B cell (primary cell): ENCODE measurements at regions of chr1 and their contacts with region 1.

Region 1: DNA sequence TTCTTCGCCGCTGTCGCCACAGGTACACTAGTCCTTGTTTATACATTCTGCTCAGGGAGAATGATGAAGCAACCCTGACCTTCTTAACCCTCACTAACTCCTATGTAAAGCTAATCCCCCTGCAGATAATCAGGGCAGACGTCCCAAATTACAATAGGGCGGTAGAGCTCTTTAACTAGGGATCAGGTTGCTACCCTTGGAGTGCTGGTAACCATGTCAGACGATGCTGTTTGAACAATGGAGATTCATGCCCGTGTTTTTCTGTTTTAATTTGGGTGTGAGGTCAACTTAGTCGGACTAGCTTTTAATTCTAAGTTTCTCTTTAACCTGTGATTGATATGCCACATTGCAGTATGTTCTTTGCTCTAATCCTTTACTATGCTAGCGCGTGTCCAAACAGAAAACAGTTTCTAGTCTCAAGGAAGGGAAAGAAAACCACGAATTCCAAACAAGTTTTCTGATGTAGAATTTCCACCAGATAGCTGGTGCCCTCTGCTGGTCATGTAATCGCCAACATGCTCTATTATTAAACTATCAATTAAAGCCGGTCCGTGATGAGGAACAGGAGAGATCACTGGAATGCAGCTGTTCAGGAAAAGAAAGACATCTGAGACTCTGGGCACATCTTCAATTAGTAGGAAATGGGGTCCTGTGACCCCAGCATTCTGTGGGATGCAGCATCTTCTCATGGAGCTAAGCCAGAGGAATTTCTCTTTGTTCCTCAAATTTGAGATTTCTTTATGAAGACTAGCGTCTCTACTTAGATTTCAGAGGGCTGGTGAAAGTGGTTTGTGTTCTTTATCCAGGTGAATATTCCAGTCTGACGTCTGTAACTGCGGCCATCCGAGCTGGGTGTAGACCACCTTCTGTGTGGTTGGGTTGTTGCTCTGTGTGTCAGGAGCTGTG is 18.3 kb upstream of the VAMP3 start:
- DNase-seq: peak; percentile 70
- ATAC-seq: peak; percentile 41
- H3K4me3 ChIP-seq: no peak overlapping the region
- H3K4me3 Mint-ChIP-seq: peak overlapping the region; percentile 42
- H3K27ac ChIP-seq: no peak overlapping the region
- H3K27ac Mint-ChIP-seq: no peak overlapping the region
- H3K4me1 ChIP-seq: peaks cover 0 to 7% of the 10 kb centered on the region in 2 donors
- H3K4me1 Mint-ChIP-seq: peaks cover 4% of the 10 kb centered on the region
- H3K27me3 ChIP-seq: no peaks in the 10 kb centered on the region
- H3K27me3 Mint-ChIP-seq: no peaks in the 10 kb centered on the region
- CTCF ChIP-seq: peak; percentile 90

Region 2: GRCh38 chr1:7680207-7680954 is 72.4 kb before region 1 on chr1:
- CTCF ChIA-PET with region 1: interaction called, 504 read pairs
- POLR2A ChIA-PET with region 1: interaction called, 3 read pairs
- intact Hi-C with region 1: no loop called
- DNase-seq: peak; percentile 60
- ATAC-seq: peak; percentile 73
- H3K4me3 ChIP-seq: peak overlapping the region in 4 of 5 experiments; percentile 38 to 64 (median 52)
- H3K4me3 Mint-ChIP-seq: peak overlapping the region; percentile 83
- H3K27ac ChIP-seq: no peak overlapping the region
- H3K27ac Mint-ChIP-seq: peak overlapping the region; percentile 53
- H3K4me1 ChIP-seq: peaks cover 6 to 12% of the 10 kb centered on the region in 2 donors
- H3K4me1 Mint-ChIP-seq: no peaks in the 10 kb centered on the region
- H3K27me3 ChIP-seq: peaks cover 0 to 21% (median 2%) of the 10 kb centered on the region in 4 experiments
- H3K27me3 Mint-ChIP-seq: peaks cover 6% of the 10 kb centered on the region
- CTCF ChIP-seq: no peak

Region 3: DNA sequence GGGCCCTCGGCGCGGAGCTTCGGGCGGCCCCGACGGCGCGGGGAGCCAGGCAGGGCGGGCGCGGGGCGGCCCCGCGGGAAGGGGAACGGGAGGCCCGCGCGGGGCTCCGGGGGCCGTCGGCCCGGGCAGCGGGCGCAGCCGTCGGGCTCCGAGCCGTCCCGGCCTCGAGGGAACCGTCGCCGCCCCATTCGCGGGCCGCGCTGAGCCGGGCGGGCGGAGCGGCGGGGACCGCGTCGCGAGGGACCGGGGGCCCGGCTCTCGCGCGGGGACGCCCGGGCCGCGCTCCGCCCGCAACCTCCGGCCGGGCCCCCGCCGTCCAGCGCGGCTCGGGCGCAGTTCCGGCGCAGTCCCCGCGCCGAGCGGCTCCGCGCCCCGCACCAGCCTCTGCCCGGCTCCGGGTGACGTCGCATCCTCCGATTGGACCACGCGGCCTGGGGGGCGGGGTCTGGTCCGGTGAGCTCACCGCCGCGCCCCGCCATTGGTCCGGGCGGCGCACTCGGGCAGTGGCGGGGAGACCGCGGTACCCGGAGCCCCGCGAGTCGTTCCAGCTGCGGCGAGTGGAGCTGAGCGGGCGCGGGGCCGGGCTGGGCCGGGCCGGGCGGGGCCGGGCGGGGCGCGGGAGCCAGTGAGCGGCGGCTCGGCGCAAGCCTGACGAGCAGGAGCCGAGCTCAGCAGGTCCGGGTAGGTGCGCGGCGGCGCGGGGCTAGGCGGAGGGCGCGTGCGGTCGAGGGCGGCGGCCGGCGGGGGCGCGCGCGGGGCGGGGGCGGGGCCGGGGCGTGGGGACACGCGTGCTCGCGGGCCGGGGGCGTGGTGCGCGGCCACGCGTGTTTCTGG is 48.3 kb before region 1 on chr1:
- CTCF ChIA-PET with region 1: interaction called, 12 read pairs
- POLR2A ChIA-PET with region 1: no interaction called
- intact Hi-C with region 1: loop called (anchors 2 kb)
- DNase-seq: peak; percentile 95
- ATAC-seq: peak; percentile 98
- H3K4me3 ChIP-seq: peak overlapping the region in 4 of 5 experiments; percentile 49 to 67 (median 62)
- H3K4me3 Mint-ChIP-seq: peak overlapping the region; percentile 88
- H3K27ac ChIP-seq: no peak overlapping the region
- H3K27ac Mint-ChIP-seq: peak overlapping the region; percentile 88
- H3K4me1 ChIP-seq: peaks cover 6 to 15% of the 10 kb centered on the region in 2 donors
- H3K4me1 Mint-ChIP-seq: peaks cover 14% of the 10 kb centered on the region
- H3K27me3 ChIP-seq: peaks cover 0 to 15% (median 7%) of the 10 kb centered on the region in 4 experiments
- H3K27me3 Mint-ChIP-seq: peaks cover 7% of the 10 kb centered on the region
- CTCF ChIP-seq: no peak

Region 4: DNA sequence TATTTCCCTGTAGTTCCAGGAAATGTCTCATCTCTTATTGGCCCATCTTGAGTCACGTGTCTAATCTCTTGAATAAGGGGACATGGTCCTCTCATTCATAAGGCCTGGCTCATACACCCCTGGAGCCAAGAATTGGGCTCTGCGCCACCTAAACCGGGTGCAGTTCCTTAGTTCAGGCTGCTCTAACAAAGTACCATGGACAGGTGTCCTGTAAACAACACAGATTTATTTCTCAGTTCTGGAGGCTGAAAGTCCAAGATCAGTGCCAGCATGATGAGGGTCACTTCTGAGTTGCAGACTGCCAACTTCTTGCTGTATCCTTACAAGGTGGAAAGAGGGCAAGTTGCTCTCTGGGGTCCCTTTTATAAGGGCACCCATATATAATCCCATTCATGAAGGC is 41.9 kb before region 1 on chr1:
- CTCF ChIA-PET with region 1: interaction called, 12 read pairs
- POLR2A ChIA-PET with region 1: no interaction called
- intact Hi-C with region 1: no loop called
- DNase-seq: no peak
- ATAC-seq: no peak
- H3K4me3 ChIP-seq: no peak overlapping the region
- H3K4me3 Mint-ChIP-seq: no peak overlapping the region
- H3K27ac ChIP-seq: no peak overlapping the region
- H3K27ac Mint-ChIP-seq: no peak overlapping the region
- H3K4me1 ChIP-seq: peaks cover 0 to 2% of the 10 kb centered on the region in 2 donors
- H3K4me1 Mint-ChIP-seq: peaks cover 4% of the 10 kb centered on the region
- H3K27me3 ChIP-seq: peaks cover 0 to 6% (median 2%) of the 10 kb centered on the region in 4 experiments
- H3K27me3 Mint-ChIP-seq: peaks cover 5% of the 10 kb centered on the region
- CTCF ChIP-seq: no peak

Region 5: DNA sequence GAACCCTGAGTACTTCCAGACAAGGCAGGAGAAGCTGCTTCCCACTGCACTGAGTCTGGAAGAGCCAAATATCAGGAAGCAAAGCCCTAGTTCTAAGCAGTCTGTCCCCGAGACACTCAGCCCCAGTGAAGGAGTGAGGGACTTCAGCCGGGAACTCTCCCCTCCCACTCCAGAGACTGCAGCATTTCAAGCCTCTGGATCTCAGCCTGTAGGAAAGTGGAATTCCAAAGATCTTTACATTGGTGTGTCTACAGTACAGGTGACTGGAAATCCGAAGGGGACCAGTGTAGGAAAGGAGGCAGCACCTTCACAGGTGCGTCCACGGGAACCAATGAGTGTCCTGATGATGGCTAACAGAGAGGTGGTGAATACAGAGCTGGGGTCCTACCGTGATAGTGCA is 14.7 kb before region 1 on chr1:
- CTCF ChIA-PET with region 1: interaction called, 17 read pairs
- POLR2A ChIA-PET with region 1: no interaction called
- intact Hi-C with region 1: no loop called
- DNase-seq: no peak
- ATAC-seq: no peak
- H3K4me3 ChIP-seq: no peak overlapping the region
- H3K4me3 Mint-ChIP-seq: no peak overlapping the region
- H3K27ac ChIP-seq: no peak overlapping the region
- H3K27ac Mint-ChIP-seq: no peak overlapping the region
- H3K4me1 ChIP-seq: peaks cover 0 to 3% of the 10 kb centered on the region in 2 donors
- H3K4me1 Mint-ChIP-seq: no peaks in the 10 kb centered on the region
- H3K27me3 ChIP-seq: no peaks in the 10 kb centered on the region
- H3K27me3 Mint-ChIP-seq: no peaks in the 10 kb centered on the region
- CTCF ChIP-seq: no peak

Region 6: DNA sequence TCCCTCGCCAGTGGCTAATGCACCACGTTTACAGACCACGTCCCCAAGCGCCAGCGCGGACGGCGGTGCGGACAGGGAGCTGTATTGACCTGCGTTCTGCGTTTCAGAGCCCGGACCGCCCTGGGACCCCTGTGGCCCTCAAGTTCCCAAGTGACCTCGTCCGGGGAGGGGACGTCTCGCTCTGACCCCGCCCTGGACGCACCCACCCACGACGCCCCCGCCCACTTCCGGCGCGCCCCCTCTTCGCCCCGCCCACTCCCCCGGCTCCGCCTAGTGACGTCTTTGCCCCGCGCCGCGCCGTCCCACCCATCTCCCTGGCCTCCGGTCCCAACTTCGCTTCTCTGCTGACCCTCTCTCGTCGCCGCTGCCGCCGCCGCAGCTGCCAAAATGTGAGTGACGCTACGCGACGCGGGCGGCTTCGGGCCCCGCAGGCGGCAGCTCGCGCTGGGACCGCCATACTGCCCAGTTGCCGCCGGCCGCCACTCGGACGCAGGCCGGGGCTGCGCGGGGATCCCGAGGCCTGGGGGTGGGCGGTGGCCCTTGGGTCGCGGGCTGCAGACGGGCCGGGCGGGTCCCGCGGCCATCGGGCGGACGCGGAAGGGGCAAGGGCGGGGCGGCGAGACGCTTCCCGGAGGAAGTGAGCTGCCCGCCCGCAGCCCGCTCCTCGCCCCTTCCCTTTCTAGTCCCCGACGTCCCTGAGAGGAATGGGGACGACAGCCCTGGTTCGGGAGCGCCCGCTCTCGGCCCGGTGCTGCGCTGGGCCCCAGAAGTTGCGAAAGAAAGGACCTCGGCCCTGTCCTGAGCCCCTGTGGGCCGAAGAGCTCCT is 18.4 kb after region 1 on chr1 and contains the start of gene VAMP3:
- CTCF ChIA-PET with region 1: interaction called, 22 read pairs
- POLR2A ChIA-PET with region 1: no interaction called
- intact Hi-C with region 1: no loop called
- DNase-seq: peak; percentile 86
- ATAC-seq: peak; percentile 96
- H3K4me3 ChIP-seq: peak within 1 kb of the TSS; percentile 70 to 86 (median 77)
- H3K4me3 Mint-ChIP-seq: peak within 1 kb of the TSS; percentile 89
- H3K27ac ChIP-seq: peak within 1 kb of the TSS; percentile 59 to 86
- H3K27ac Mint-ChIP-seq: peak within 1 kb of the TSS; percentile 88
- H3K4me1 ChIP-seq: peaks cover 12 to 15% of the 10 kb centered on the region in 2 donors
- H3K4me1 Mint-ChIP-seq: peaks cover 28% of the 10 kb centered on the region
- H3K27me3 ChIP-seq: no peaks in the 10 kb centered on the region
- H3K27me3 Mint-ChIP-seq: no peaks in the 10 kb centered on the region
- CTCF ChIP-seq: no peak
- total RNA-seq, gene VAMP3: 48.6 and 49.6 TPM in 2 replicates

Region 7: GRCh38 chr1:7902478-7903085 is 149.8 kb after region 1 on chr1:
- CTCF ChIA-PET with region 1: interaction called, 4 read pairs
- POLR2A ChIA-PET with region 1: no interaction called
- intact Hi-C with region 1: loop called (anchors 2 kb)
- DNase-seq: peak; percentile 77
- ATAC-seq: peak; percentile 67
- H3K4me3 ChIP-seq: peak overlapping the region in 2 of 5 experiments; percentile 20 to 38
- H3K4me3 Mint-ChIP-seq: peak overlapping the region; percentile 59
- H3K27ac ChIP-seq: no peak overlapping the region
- H3K27ac Mint-ChIP-seq: no peak overlapping the region
- H3K4me1 ChIP-seq: peaks cover 3 to 6% of the 10 kb centered on the region in 2 donors
- H3K4me1 Mint-ChIP-seq: peaks cover 2% of the 10 kb centered on the region
- H3K27me3 ChIP-seq: peaks cover 0 to 9% (median 0%) of the 10 kb centered on the region in 4 experiments
- H3K27me3 Mint-ChIP-seq: no peaks in the 10 kb centered on the region
- CTCF ChIP-seq: peak; percentile 73